Naive thymus-derived CD4-positive, alpha-beta T cell (primary cell): ENCODE measurements at regions of chr1 and their contacts with region 1.

Region 1: DNA sequence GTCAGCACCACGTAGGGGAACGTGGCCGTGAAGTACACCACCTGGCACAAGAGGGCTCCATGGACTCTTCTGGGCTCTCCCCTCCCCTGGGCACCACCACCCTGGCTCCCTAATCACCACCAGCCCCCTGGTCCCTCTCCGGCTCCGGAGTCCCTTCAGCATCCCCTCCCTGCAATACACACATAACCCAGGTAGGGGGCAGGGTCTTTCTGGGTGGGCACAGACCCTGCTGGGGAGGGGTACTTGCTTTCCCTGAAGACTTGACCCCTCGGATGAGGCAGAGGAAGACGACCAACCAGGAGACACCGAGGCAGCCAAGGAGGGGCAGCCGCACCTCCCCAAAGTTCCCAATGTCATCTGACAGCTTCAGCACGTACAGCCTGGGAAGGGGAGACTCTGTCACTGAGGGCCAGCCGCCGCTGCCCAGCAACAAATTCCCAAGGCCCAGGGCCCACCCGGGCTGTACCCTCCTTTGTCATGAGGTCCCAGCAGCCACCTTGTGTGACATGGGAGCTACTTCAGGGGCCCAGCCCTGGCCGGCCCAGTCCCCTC is 11.3 kb downstream of the CCDC24 start:
- DNase-seq: no peak
- ATAC-seq: no peak
- H3K4me3 ChIP-seq: no peak overlapping the region
- H3K4me3 Mint-ChIP-seq: no peak overlapping the region
- H3K27ac ChIP-seq: no peak overlapping the region
- H3K27ac Mint-ChIP-seq: no peak overlapping the region
- H3K4me1 ChIP-seq: no peaks in the 10 kb centered on the region
- H3K4me1 Mint-ChIP-seq: peaks cover 0 to 4% (median 0%) of the 10 kb centered on the region in 7 donors
- H3K27me3 ChIP-seq: peaks cover 0 to 2% of the 10 kb centered on the region in 2 donors
- H3K27me3 Mint-ChIP-seq: peaks cover 0 to 4% (median 0%) of the 10 kb centered on the region in 5 donors

Region 2: GRCh38 chr1:43979528-43980254 is 23.0 kb before region 1 on chr1:
- CTCF ChIA-PET with region 1: no interaction called
- POLR2A ChIA-PET with region 1: no interaction called
- intact Hi-C with region 1: no loop called
- DNase-seq: peak in 1 of 9 donors; percentile 60
- ATAC-seq: no peak
- H3K4me3 ChIP-seq: peak overlapping the region; percentile 4
- H3K4me3 Mint-ChIP-seq: peak overlapping the region; percentile 71 to 93 (median 86)
- H3K27ac ChIP-seq: no peak overlapping the region
- H3K27ac Mint-ChIP-seq: peak overlapping the region in 2 of 9 donors; percentile 58 to 81
- H3K4me1 ChIP-seq: peaks cover 16 to 18% of the 10 kb centered on the region in 2 donors
- H3K4me1 Mint-ChIP-seq: peaks cover 25 to 46% (median 37%) of the 10 kb centered on the region in 7 donors
- H3K27me3 ChIP-seq: peaks cover 0 to 7% of the 10 kb centered on the region in 2 donors
- H3K27me3 Mint-ChIP-seq: peaks cover 0 to 15% (median 6%) of the 10 kb centered on the region in 5 donors

Region 3: DNA sequence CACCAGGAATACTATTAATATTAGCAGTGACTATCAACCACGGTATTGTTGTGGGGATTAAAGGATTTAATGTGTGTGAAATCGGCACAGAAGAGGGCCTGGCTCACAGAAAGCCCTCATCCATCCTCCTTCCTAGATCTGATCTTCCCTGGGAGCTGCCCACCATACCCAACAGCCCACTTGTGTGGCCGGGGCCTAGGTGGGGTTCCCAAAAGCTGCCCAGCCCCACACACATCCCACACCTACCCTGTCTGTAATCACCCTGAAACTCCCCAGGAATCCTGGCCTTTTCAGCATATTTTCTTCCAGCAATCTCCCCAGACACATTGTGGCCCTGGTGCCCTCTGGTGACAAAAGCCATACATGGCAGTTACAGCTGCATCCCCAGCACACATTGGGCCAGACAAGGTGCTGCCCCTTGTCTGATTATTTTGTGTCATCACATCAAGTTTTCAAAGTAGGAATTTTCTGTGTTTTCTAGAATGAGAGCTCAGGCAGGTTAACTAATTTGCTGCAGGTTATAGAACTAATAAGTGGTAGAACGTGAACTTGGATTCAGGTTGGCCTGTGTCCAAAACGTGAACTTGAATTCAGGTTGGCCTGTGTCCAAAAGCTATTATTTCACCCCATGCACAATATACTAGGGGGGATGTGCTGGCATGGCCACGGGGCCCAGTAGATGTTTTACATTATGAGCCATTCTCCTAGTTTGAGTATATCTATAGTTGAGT is 33.9 kb after region 1 on chr1:
- CTCF ChIA-PET with region 1: interaction called, 87 read pairs
- POLR2A ChIA-PET with region 1: no interaction called
- intact Hi-C with region 1: loop called (anchors 1 kb)
- DNase-seq: peak; percentile 32 to 71 (median 58)
- ATAC-seq: peak; percentile 88
- H3K4me3 ChIP-seq: no peak overlapping the region
- H3K4me3 Mint-ChIP-seq: peak overlapping the region in 1 of 10 donors; percentile 1
- H3K27ac ChIP-seq: no peak overlapping the region
- H3K27ac Mint-ChIP-seq: peak overlapping the region in 1 of 9 donors; percentile 18
- H3K4me1 ChIP-seq: no peaks in the 10 kb centered on the region
- H3K4me1 Mint-ChIP-seq: peaks cover 0 to 19% (median 0%) of the 10 kb centered on the region in 7 donors
- H3K27me3 ChIP-seq: no peaks in the 10 kb centered on the region
- H3K27me3 Mint-ChIP-seq: peaks cover 0 to 12% (median 0%) of the 10 kb centered on the region in 5 donors

Region 4: GRCh38 chr1:44048816-44049215 is 46.1 kb after region 1 on chr1:
- CTCF ChIA-PET with region 1: interaction called, 68 read pairs
- POLR2A ChIA-PET with region 1: no interaction called
- intact Hi-C with region 1: loop called (anchors 1 kb)
- DNase-seq: no peak
- ATAC-seq: no peak
- H3K4me3 ChIP-seq: no peak overlapping the region
- H3K4me3 Mint-ChIP-seq: no peak overlapping the region
- H3K27ac ChIP-seq: no peak overlapping the region
- H3K27ac Mint-ChIP-seq: no peak overlapping the region
- H3K4me1 ChIP-seq: no peaks in the 10 kb centered on the region
- H3K4me1 Mint-ChIP-seq: peaks cover 0 to 14% (median 5%) of the 10 kb centered on the region in 7 donors
- H3K27me3 ChIP-seq: no peaks in the 10 kb centered on the region
- H3K27me3 Mint-ChIP-seq: peaks cover 2 to 20% (median 8%) of the 10 kb centered on the region in 5 donors